PC-9 (cell line): ENCODE measurements at regions of chr13 and their contacts with region 1.

Region 1: DNA sequence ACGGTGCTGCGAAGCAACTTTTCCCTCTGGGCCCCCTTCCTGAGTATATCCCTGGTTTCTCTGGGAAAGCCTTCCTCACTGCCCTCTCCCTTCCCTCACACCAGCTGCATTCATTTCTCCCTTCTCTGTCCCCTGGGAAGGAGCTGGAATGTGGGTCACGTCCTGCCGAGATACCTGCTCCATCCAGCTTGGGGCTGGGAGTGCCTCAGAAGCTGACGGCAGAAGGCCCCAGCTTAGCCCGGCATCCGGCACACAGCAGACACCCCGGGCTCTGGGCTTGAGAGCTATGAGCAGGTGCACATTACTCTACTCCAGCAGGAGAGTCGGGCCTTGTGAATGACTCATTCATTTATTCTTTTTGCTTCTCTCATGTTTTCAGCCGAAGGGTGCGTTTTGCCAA is 170.6 kb downstream of the TEX29 start:
- DNase-seq: no peak
- H3K4me3 ChIP-seq: no peak overlapping the region
- H3K27ac ChIP-seq: no peak overlapping the region
- H3K4me1 ChIP-seq: no peaks in the 10 kb centered on the region
- H3K27me3 ChIP-seq: peaks cover 96% of the 10 kb centered on the region
- CTCF ChIP-seq: no peak

Region 2: GRCh38 chr13:111539791-111540446 is 48.9 kb after region 1 on chr13:
- CTCF ChIA-PET with region 1: no interaction called
- POLR2A ChIA-PET with region 1: no interaction called
- intact Hi-C with region 1: no loop called
- DNase-seq: no peak
- H3K4me3 ChIP-seq: no peak overlapping the region
- H3K27ac ChIP-seq: no peak overlapping the region
- H3K4me1 ChIP-seq: no peaks in the 10 kb centered on the region
- H3K27me3 ChIP-seq: peaks cover 100% of the 10 kb centered on the region
- CTCF ChIP-seq: no peak

Region 3: DNA sequence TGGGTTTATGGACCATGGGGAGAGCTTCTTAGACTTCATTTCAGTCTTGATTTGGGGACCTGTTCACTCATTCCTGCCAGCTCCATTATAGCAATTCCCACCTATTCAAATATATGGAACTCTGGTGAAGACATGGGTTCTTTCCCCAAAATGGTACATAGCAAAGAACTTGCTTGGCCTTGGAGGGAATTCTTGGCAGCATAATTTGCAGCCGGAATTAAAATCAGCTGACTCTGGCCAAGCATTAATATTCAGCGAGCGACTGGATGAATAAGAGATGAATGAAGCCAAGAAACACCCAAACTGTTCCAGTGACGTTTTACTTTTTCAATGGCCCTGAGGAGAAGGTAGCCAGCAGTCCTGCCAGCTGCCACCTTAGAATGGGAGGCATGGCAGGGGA is 487.5 kb after region 1 on chr13:
- CTCF ChIA-PET with region 1: no interaction called
- POLR2A ChIA-PET with region 1: interaction called, 44 read pairs
- intact Hi-C with region 1: no loop called
- DNase-seq: no peak
- H3K4me3 ChIP-seq: no peak overlapping the region
- H3K27ac ChIP-seq: no peak overlapping the region
- H3K4me1 ChIP-seq: no peaks in the 10 kb centered on the region
- H3K27me3 ChIP-seq: peaks cover 69% of the 10 kb centered on the region
- CTCF ChIP-seq: no peak